Dorsolateral prefrontal cortex (tissue), 120 donors: ENCODE measurements at regions of chr12 and their contacts with region 1.

Region 1: DNA sequence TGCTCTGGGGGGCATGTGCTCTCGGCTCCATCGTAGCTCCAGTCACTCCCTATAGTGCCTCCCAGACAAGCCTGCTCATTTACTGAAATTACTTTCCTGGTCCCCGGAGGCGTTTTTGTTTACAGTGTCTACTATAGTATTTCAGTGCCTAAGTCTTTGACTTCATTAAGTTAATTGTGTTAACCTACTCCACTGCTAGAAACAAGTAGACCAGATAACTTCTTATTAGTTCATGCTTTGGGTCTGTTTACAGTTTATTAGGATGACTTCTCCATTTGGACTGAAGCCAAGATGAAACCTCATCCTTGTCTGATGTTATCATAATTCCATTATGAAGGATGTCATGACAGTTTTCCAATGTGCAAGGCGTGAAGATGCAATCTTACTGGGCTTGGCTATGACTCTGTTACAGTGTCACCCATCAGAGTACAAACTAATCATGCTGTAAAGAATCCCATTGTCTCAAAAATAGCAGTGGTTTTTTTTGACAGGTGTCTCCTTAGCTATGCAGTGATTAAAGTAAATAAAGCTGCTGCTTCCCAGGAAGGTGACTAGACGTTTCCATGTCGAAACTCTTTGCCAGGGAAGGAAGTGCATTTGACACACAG is 182.4 kb downstream of the TMEM132C start:
- DNase-seq: no peak
- H3K4me3 ChIP-seq: peak overlapping the region in 1 of 59 donors; percentile 9
- H3K27ac ChIP-seq: peak overlapping the region in 10 of 59 donors; percentile 0 to 82 (median 20)
- H3K27me3 ChIP-seq: no peaks in the 10 kb centered on the region
- CTCF ChIP-seq: no peak

Region 2: GRCh38 chr12:127677537-127678131 is 771.7 kb before region 1 on chr12:
- intact Hi-C with region 1: no loop called
- DNase-seq: peak; percentile 63 to 88 (median 80)
- H3K4me3 ChIP-seq: no peak overlapping the region
- H3K27ac ChIP-seq: peak overlapping the region in 49 of 59 donors; percentile 3 to 83 (median 63)
- H3K27me3 ChIP-seq: no peaks in the 10 kb centered on the region
- CTCF ChIP-seq: peak; percentile 74 to 93 (median 84)

Region 3: GRCh38 chr12:128394137-128394536 is 55.2 kb before region 1 on chr12:
- intact Hi-C with region 1: loop called in 1 of 2 experiments (anchors 5 kb)
- DNase-seq: no peak
- H3K4me3 ChIP-seq: no peak overlapping the region
- H3K27ac ChIP-seq: no peak overlapping the region
- H3K27me3 ChIP-seq: peaks cover 0 to 4% (median 0%) of the 10 kb centered on the region in 45 donors
- CTCF ChIP-seq: no peak

Region 4: GRCh38 chr12:128840862-128841468 is 391.6 kb after region 1 on chr12:
- intact Hi-C with region 1: no loop called
- DNase-seq: peak in 1 of 10 donors; percentile 8
- H3K4me3 ChIP-seq: no peak overlapping the region
- H3K27ac ChIP-seq: no peak overlapping the region
- H3K27me3 ChIP-seq: no peaks in the 10 kb centered on the region
- CTCF ChIP-seq: no peak